ENCODE measurements at regions of chr7 and their contacts with region 1.

Region 1: DNA sequence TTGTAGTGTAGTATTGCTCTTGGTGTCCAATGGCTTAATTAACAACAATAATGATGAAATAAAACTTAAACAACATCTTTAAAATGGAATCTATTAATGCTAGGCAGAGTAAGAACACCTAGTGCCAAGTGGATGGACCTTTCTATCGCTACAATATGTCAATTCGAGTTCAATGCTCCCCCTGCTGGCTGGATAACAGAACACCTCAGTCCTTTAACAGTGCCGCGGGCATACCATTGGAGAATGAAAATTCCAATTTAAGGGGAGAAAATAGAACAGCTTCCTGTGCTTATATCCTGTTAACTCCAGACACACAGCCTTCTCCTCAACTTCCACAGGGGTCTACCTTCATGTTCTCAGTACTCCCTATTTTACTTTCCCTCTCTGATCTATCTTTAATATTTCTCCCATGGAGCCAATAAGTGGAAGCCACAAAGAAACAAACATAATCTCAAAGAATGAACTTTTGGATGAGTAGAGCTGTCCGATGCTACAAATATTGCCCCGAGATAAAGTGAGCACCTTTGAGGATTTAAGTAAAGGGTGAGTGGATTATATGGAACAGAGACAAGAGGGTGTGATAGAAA is 41.4 kb downstream of the COL1A2 start:
- DNase-seq: no peak
- H3K4me3 ChIP-seq: no peak overlapping the region
- H3K27ac ChIP-seq: no peak overlapping the region
- H3K27me3 ChIP-seq: no peaks in the 10 kb centered on the region
- CTCF ChIP-seq: peak; percentile 82

Region 2: GRCh38 chr7:93538076-93538475 is 898.0 kb before region 1 on chr7:
- CTCF ChIA-PET with region 1: no interaction called
- POLR2A ChIA-PET with region 1: no interaction called
- DNase-seq: no peak
- H3K4me3 ChIP-seq: no peak overlapping the region
- H3K27ac ChIP-seq: no peak overlapping the region
- H3K27me3 ChIP-seq: no peaks in the 10 kb centered on the region
- CTCF ChIP-seq: no peak

Region 3: GRCh38 chr7:94295850-94296249 is 140.3 kb before region 1 on chr7:
- CTCF ChIA-PET with region 1: interaction called, 539 read pairs
- POLR2A ChIA-PET with region 1: interaction called, 11 read pairs
- DNase-seq: peak; percentile 60
- H3K4me3 ChIP-seq: peak overlapping the region; percentile 41
- H3K27ac ChIP-seq: no peak overlapping the region
- H3K27me3 ChIP-seq: no peaks in the 10 kb centered on the region
- CTCF ChIP-seq: peak; percentile 80

Region 4: DNA sequence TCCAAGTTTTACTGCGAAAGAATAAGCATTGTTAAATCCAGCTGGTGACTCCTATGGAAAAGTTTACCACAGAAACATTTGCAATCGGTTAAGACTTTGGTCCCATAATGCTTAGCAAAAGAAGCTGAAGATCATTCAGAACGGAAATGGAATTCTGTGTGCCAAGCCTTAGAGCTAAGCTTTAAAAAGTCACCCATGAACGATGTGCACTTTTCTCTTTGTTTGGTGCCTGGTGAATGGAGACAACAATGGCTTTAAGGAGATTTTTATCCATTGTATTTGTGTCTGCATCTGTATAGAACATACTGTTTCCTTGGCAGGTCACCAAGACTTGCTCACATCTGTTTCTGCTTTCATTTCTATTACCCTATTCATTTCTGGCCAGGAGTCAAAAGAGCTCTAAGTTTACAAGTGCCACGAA is 67.7 kb before region 1 on chr7:
- CTCF ChIA-PET with region 1: interaction called, 11 read pairs
- POLR2A ChIA-PET with region 1: no interaction called
- DNase-seq: peak; percentile 76
- H3K4me3 ChIP-seq: peak overlapping the region; percentile 36
- H3K27ac ChIP-seq: peak overlapping the region; percentile 87
- H3K27me3 ChIP-seq: no peaks in the 10 kb centered on the region
- CTCF ChIP-seq: no peak

Region 5: GRCh38 chr7:94400643-94401427 is 35.3 kb before region 1 on chr7:
- CTCF ChIA-PET with region 1: interaction called, 11 read pairs
- POLR2A ChIA-PET with region 1: interaction called, 10 read pairs
- DNase-seq: no peak
- H3K4me3 ChIP-seq: peak overlapping the region; percentile 96
- H3K27ac ChIP-seq: peak overlapping the region; percentile 66
- H3K27me3 ChIP-seq: no peaks in the 10 kb centered on the region
- CTCF ChIP-seq: no peak

Region 6: GRCh38 chr7:94449148-94449725 is 13.1 kb after region 1 on chr7:
- CTCF ChIA-PET with region 1: interaction called, 19 read pairs
- POLR2A ChIA-PET with region 1: no interaction called
- DNase-seq: no peak
- H3K4me3 ChIP-seq: no peak overlapping the region
- H3K27ac ChIP-seq: no peak overlapping the region
- H3K27me3 ChIP-seq: no peaks in the 10 kb centered on the region
- CTCF ChIP-seq: peak; percentile 65

Region 7: GRCh38 chr7:94481279-94481678 is 45.2 kb after region 1 on chr7:
- CTCF ChIA-PET with region 1: no interaction called
- POLR2A ChIA-PET with region 1: no interaction called
- DNase-seq: no peak
- H3K4me3 ChIP-seq: no peak overlapping the region
- H3K27ac ChIP-seq: no peak overlapping the region
- H3K27me3 ChIP-seq: peaks cover 6% of the 10 kb centered on the region
- CTCF ChIP-seq: no peak

Measured in AG04450 (cell line).